ENCODE measurements at regions of chr3 and their contacts with region 1.

Region 1: DNA sequence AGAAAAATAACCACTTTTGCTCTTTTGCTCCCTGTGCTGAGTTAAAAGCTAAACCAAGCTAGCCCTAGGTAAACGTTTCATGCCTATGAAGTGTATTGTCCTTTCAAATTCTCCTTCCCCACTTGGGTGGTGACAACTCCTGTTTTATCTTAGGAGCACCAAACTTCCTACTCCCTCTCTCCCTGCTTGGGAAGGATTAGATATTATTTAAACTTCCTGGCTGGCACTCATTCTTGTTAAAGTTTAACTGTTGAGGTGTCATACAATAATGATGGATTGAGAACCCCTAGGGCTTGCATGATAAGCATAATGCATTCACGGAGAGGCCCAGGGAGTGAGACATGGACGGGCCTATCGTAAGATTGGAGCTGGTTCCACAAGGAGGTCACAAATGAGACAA is 29.5 kb downstream of the B4GALT4 start:
- DNase-seq: no peak
- H3K4me3 ChIP-seq: no peak overlapping the region
- H3K27ac ChIP-seq: no peak overlapping the region
- H3K4me1 ChIP-seq: peaks cover 17% of the 10 kb centered on the region
- CTCF ChIP-seq: no peak

Region 2: GRCh38 chr3:119225121-119225520 is 13.9 kb after region 1 on chr3:
- CTCF ChIA-PET with region 1: no interaction called
- POLR2A ChIA-PET with region 1: interaction called, 11 read pairs
- intact Hi-C with region 1: no loop called
- DNase-seq: no peak
- H3K4me3 ChIP-seq: no peak overlapping the region
- H3K27ac ChIP-seq: no peak overlapping the region
- H3K4me1 ChIP-seq: no peaks in the 10 kb centered on the region
- CTCF ChIP-seq: no peak

Region 3: GRCh38 chr3:119235151-119235550 is 24.0 kb after region 1 on chr3:
- CTCF ChIA-PET with region 1: no interaction called
- POLR2A ChIA-PET with region 1: no interaction called
- intact Hi-C with region 1: no loop called
- DNase-seq: no peak
- H3K4me3 ChIP-seq: no peak overlapping the region
- H3K27ac ChIP-seq: no peak overlapping the region
- H3K4me1 ChIP-seq: peaks cover 5% of the 10 kb centered on the region
- CTCF ChIP-seq: no peak

Region 4: GRCh38 chr3:119408243-119408950 is 197.2 kb after region 1 on chr3:
- CTCF ChIA-PET with region 1: no interaction called
- POLR2A ChIA-PET with region 1: no interaction called
- intact Hi-C with region 1: no loop called
- DNase-seq: no peak
- H3K4me3 ChIP-seq: no peak overlapping the region
- H3K27ac ChIP-seq: no peak overlapping the region
- H3K4me1 ChIP-seq: peaks cover 22% of the 10 kb centered on the region
- CTCF ChIP-seq: no peak